Keratinocyte (primary cell): ENCODE measurements at regions of chr1 and their contacts with region 1.

Region 1: GRCh38 chr1:203351037-203352013 is at the start of gene FMOD:
- DNase-seq: no peak
- H3K4me3 ChIP-seq: no peak within 1 kb of the TSS
- H3K27ac ChIP-seq: no peak within 1 kb of the TSS
- H3K4me1 ChIP-seq: no peaks in the 10 kb centered on the region
- H3K27me3 ChIP-seq: peaks cover 20% of the 10 kb centered on the region
- CTCF ChIP-seq: peak in 1 of 3 experiments; percentile 19
- polyA plus RNA-seq, gene FMOD: 0.39 to 0.47 TPM (median 0.44 TPM) in 3 replicates

Region 2: DNA sequence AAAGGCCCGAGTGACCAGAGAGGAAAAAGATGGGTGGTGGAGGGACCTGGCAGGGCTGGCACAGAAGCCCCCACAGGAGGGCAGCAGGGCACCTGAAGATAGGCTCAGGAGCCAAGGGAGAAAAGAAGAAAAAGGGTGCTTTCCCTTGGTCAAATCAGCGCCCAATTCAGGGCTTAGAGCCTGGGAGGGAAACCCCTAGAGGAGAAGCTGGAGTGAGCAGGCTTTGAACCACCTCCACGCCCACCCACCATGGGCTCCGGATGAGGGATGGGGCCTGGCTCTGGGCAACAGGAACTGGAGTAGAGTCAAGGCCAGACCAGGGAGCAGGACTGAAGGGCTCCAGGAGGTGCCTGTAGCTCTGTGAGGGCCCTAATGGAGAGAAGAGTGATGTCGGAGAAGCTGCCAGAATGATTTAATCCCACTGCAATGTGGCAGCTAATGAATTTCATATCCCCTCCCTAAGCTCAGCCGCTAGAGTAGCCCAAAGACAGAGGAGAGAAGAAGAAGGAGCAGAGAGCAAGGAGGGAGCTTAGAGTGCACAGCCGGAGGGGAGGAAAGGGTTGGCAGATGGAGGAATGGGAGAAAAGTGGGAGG is 112.2 kb after region 1 on chr1:
- dilution Hi-C with region 1: loop called (anchors 25 kb)
- DNase-seq: no peak
- H3K4me3 ChIP-seq: no peak overlapping the region
- H3K27ac ChIP-seq: no peak overlapping the region
- H3K4me1 ChIP-seq: peaks cover 5% of the 10 kb centered on the region
- H3K27me3 ChIP-seq: peaks cover 12% of the 10 kb centered on the region
- CTCF ChIP-seq: no peak